Dorsolateral prefrontal cortex (tissue), 120 donors: ENCODE measurements at regions of chr1 and their contacts with region 1.

Region 1: DNA sequence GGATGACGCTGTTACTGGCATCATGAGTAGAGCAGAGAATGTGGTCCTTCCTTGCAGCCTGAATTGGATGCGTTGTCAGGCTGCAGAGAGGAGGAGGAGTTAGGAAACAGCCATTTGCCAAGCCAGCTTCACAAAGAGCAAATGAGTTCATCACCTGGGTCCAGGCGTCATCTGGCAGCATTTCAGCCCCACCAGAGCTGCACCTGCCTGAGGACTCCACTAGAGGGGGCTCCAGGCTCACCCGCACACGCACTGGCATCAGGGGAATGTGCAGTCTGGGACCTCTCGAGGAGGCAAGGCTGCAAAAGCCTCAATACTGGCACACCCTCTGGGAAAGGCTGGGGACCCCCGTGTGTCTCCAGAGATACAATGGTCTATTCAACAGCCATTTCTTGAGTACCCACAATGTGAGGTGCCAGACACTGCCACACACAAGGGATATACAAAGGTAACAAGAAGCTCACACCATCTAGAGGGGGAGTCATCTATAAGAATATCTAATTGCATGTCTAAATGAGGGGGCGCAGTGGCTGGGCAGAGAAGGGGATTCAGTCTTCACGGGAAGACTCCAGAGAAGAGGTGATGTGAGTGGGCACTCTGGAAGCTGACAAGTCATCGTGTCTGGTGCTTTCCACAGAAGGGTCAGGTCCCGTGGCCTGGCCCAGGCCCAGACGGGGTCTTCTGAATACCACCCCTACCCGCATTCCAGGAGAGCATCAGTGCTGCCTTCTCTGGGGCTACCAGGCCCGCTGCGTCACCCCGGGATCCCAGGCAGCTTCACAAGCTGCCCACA is 53.5 kb upstream of the CNTN2 start:
- DNase-seq: peak; percentile 73 to 89 (median 86)
- H3K4me3 ChIP-seq: peak overlapping the region in 3 of 59 donors; percentile 16 to 31 (median 22)
- H3K27ac ChIP-seq: peak overlapping the region; percentile 85 to 100 (median 98)
- H3K27me3 ChIP-seq: no peaks in the 10 kb centered on the region
- CTCF ChIP-seq: peak; percentile 84 to 99 (median 96)

Region 2: GRCh38 chr1:205061665-205062069 is 72.2 kb after region 1 on chr1:
- intact Hi-C with region 1: loop called (anchors 1 to 2 kb)
- DNase-seq: peak; percentile 83 to 95 (median 89)
- H3K4me3 ChIP-seq: peak overlapping the region in 13 of 59 donors; percentile 3 to 39 (median 31)
- H3K27ac ChIP-seq: peak overlapping the region in 58 of 59 donors; percentile 33 to 100 (median 81)
- H3K27me3 ChIP-seq: no peaks in the 10 kb centered on the region
- CTCF ChIP-seq: peak; percentile 68 to 96 (median 89)

Region 3: GRCh38 chr1:205091043-205091740 is 101.7 kb after region 1 on chr1:
- intact Hi-C with region 1: no loop called
- DNase-seq: no peak
- H3K4me3 ChIP-seq: no peak overlapping the region
- H3K27ac ChIP-seq: peak overlapping the region in 22 of 59 donors; percentile 7 to 69 (median 36)
- H3K27me3 ChIP-seq: no peaks in the 10 kb centered on the region
- CTCF ChIP-seq: no peak

Region 4: GRCh38 chr1:205121660-205122488 is 132.4 kb after region 1 on chr1 and contains the start of gene RBBP5:
- intact Hi-C with region 1: loop called (anchors 5 kb)
- DNase-seq: peak; percentile 92 to 97 (median 95)
- H3K4me3 ChIP-seq: peak within 1 kb of the TSS; percentile 72 to 100 (median 92)
- H3K27ac ChIP-seq: peak within 1 kb of the TSS; percentile 86 to 100 (median 98)
- H3K27me3 ChIP-seq: no peaks in the 10 kb centered on the region
- CTCF ChIP-seq: peak; percentile 39 to 91 (median 75)
- total RNA-seq, gene RBBP5: 14.3 to 46.6 (median 24.8) TPM

Region 5: GRCh38 chr1:205141236-205142101 is 152.0 kb after region 1 on chr1:
- intact Hi-C with region 1: loop called (anchors 5 kb)
- DNase-seq: peak; percentile 47 to 88 (median 72)
- H3K4me3 ChIP-seq: peak overlapping the region in 32 of 59 donors; percentile 1 to 52 (median 23)
- H3K27ac ChIP-seq: peak overlapping the region in 45 of 59 donors; percentile 13 to 71 (median 46)
- H3K27me3 ChIP-seq: no peaks in the 10 kb centered on the region
- CTCF ChIP-seq: peak; percentile 64 to 92 (median 84)

Region 6: DNA sequence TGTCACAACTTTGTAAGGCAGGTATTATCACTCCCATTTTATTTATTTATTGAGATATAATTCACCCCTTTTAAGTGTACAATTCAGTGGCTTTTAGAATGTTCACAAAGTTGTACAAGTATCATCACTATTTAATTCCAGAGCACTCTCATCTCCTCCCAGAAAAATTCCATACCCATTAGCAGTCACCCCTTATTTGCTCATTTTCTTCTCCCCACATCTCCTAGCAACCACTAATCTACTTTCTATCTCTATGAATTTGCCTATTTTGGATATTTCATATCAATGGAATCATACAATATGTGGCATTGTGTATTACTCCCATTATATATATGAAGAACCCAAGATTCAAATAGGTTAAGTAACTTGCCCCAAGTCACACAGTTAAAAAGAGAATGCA is 215.1 kb after region 1 on chr1:
- intact Hi-C with region 1: loop called in 1 of 2 experiments (anchors 10 kb)
- DNase-seq: no peak
- H3K4me3 ChIP-seq: no peak overlapping the region
- H3K27ac ChIP-seq: peak overlapping the region in 4 of 59 donors; percentile 8 to 58 (median 44)
- H3K27me3 ChIP-seq: no peaks in the 10 kb centered on the region
- CTCF ChIP-seq: no peak

Region 7: DNA sequence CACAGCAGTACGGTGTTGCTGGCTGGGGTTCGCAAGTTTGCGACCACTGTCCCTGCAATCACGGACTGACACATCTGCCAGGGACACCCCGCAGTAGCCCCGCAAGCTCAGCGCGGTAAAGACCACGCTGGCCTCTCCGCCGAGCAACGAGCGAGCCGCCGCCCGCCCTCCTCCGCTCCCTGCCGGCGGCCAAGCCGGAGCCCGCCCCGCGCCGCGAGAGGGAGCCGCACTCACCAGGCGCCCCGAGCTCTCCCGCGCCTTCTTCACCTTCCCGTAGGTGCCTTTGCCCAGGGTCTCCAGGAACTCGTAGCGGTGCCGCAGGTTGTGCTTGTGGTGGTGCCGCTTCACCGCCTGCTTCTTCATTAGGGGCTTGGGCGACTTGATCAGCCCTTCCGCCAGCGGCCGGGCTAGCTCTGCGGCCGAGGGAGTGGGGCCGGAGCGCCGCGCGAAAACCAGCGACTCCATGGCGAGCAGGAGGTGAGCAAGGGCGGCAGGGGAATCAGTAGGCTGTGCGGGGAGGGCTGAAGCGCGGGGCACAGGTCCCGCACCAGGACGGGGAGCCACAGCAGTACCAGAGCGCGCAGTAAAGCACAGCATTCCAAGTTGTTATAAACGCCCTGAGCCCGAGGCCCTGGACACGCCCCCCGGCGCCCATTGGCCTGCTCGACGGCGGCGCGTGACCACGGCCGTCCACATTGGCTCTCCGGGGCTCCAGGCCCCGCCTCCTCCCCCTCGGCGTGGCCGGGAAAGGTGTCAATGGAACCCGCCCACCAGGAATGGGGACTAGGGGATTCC is 331.9 kb after region 1 on chr1 and contains the start of gene NUAK2:
- intact Hi-C with region 1: loop called in 1 of 2 experiments (anchors 10 kb)
- DNase-seq: peak; percentile 91 to 97 (median 93)
- H3K4me3 ChIP-seq: peak within 1 kb of the TSS; percentile 49 to 95 (median 85)
- H3K27ac ChIP-seq: peak within 1 kb of the TSS in 53 of 59 donors; percentile 18 to 93 (median 78)
- H3K27me3 ChIP-seq: peaks cover 0 to 4% (median 0%) of the 10 kb centered on the region in 45 donors
- CTCF ChIP-seq: peak in 49 of 56 donors; percentile 8 to 61 (median 39)
- total RNA-seq, gene NUAK2: 0.55 to 5.2 (median 1.7) TPM